ENCODE measurements at regions of chr1 and their contacts with region 1.

Region 1: GRCh38 chr1:29235955-29236684 is at the start of gene PTPRU:
- DNase-seq: peak; percentile 59
- H3K4me3 ChIP-seq: peak within 1 kb of the TSS in 2 of 3 experiments; percentile 6 to 33
- H3K27ac ChIP-seq: no peak within 1 kb of the TSS
- H3K4me1 ChIP-seq: peaks cover 16% of the 10 kb centered on the region
- H3K27me3 ChIP-seq: peaks cover 34 to 40% of the 10 kb centered on the region in 2 experiments
- CTCF ChIP-seq: peak; percentile 62 to 83
- POLR2A ChIP-seq: no peak
- total RNA-seq, gene PTPRU: 2.6 and 3.3 TPM in 2 replicates

Region 2: GRCh38 chr1:29171089-29171488 is 65.0 kb before region 1 on chr1:
- CTCF ChIA-PET with region 1: no interaction called
- POLR2A ChIA-PET with region 1: no interaction called
- dilution Hi-C with region 1: no loop called
- intact Hi-C with region 1: no loop called
- DNase-seq: no peak
- H3K4me3 ChIP-seq: no peak overlapping the region
- H3K27ac ChIP-seq: no peak overlapping the region
- H3K4me1 ChIP-seq: no peaks in the 10 kb centered on the region
- H3K27me3 ChIP-seq: no peaks in the 10 kb centered on the region
- CTCF ChIP-seq: no peak
- POLR2A ChIP-seq: no peak

Region 3: GRCh38 chr1:29341936-29342335 is 105.8 kb after region 1 on chr1:
- CTCF ChIA-PET with region 1: interaction called, 4 read pairs
- POLR2A ChIA-PET with region 1: interaction called, 9 read pairs
- dilution Hi-C with region 1: no loop called
- intact Hi-C with region 1: loop called (anchors 1 kb)
- DNase-seq: no peak
- H3K4me3 ChIP-seq: no peak overlapping the region
- H3K27ac ChIP-seq: no peak overlapping the region
- H3K4me1 ChIP-seq: no peaks in the 10 kb centered on the region
- H3K27me3 ChIP-seq: peaks cover 0 to 2% of the 10 kb centered on the region in 2 experiments
- CTCF ChIP-seq: no peak
- POLR2A ChIP-seq: no peak

Region 4: GRCh38 chr1:29453502-29454240 is 217.6 kb after region 1 on chr1:
- CTCF ChIA-PET with region 1: no interaction called
- POLR2A ChIA-PET with region 1: no interaction called
- dilution Hi-C with region 1: no loop called
- intact Hi-C with region 1: loop called (anchors 5 kb)
- DNase-seq: peak; percentile 26
- H3K4me3 ChIP-seq: no peak overlapping the region
- H3K27ac ChIP-seq: no peak overlapping the region
- H3K4me1 ChIP-seq: no peaks in the 10 kb centered on the region
- H3K27me3 ChIP-seq: no peaks in the 10 kb centered on the region
- CTCF ChIP-seq: peak; percentile 6 to 18
- POLR2A ChIP-seq: no peak

Region 5: DNA sequence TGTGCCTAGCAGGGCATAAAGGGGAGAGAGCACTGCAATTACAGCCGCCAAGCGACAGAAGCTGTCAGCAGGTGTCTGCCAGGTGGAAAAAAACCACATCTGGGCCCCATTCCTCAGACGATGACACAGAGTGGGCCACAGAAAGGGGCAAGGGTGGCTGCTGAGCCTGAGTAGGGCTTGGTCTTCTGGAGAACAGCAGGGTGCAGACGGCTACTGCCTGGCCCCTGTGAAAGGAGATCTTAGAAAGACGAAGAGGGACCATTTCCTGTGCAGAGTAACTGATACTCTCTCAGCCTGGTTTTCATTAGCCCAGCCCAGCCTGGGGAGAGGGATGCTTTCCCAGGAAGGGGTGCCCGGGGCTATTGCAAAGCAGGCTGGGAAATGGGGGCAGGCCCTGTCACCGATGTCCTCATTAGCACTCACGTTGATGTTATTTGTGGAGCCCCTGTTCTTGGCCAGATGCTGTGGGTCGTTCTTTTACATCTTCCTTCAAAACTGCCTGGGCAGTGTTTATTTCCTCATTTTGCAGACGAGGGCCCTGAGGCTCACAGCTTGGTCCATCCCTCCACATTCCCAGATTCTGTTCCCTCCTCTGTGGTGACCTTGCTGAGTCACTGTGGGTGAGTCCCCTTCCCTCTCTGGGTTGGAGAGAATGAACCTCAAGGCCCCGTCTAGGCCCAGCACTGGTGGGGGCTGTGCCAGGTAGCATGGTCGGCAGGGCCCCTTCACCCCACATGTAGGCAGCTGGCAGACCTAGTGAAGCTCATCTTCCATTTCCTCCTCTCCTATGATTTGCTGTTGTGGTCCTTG is 473.0 kb after region 1 on chr1:
- CTCF ChIA-PET with region 1: interaction called, 5 read pairs
- POLR2A ChIA-PET with region 1: no interaction called
- dilution Hi-C with region 1: no loop called
- intact Hi-C with region 1: loop called (anchors 2 kb)
- DNase-seq: no peak
- H3K4me3 ChIP-seq: no peak overlapping the region
- H3K27ac ChIP-seq: peak overlapping the region; percentile 95
- H3K4me1 ChIP-seq: peaks cover 48% of the 10 kb centered on the region
- H3K27me3 ChIP-seq: peaks cover 10 to 12% of the 10 kb centered on the region in 2 experiments
- CTCF ChIP-seq: no peak
- POLR2A ChIP-seq: peak; percentile 60

Region 6: DNA sequence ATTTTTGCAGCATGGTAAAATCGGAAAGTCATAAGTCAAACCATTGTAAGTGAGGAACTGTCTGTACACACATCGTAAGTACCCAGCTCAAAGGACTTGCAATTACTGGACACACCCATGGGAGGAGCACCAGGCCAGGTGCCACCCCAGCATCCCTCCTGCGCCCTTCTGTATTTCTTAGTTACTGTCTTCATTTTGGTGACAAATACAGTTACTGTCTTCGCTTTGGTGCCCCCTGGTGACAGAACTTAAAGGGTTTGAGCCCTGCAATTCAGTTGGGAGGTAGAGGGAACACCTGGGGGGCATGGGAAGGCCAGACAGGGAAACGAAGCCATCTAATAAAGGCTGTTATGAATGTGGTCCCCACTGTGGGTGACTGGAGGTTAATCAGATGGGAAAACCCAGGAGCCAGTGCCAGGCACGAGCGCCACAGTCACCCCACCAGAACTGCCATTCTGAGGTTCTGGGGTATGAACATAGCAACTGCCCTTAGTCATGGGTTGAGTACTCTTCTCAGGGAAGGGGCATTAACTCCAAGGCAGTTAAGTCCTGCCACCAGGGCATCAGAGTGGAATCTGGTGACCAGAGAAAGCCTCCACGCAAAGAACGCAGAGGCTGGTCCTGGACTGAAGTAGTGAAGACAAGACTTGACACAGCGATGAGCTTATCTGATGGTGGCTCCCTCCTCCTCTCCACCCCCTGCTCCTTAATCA is 613.1 kb after region 1 on chr1:
- CTCF ChIA-PET with region 1: no interaction called
- POLR2A ChIA-PET with region 1: no interaction called
- dilution Hi-C with region 1: no loop called
- intact Hi-C with region 1: loop called (anchors 1 kb)
- DNase-seq: peak; percentile 21
- H3K4me3 ChIP-seq: no peak overlapping the region
- H3K27ac ChIP-seq: no peak overlapping the region
- H3K4me1 ChIP-seq: no peaks in the 10 kb centered on the region
- H3K27me3 ChIP-seq: no peaks in the 10 kb centered on the region
- CTCF ChIP-seq: peak; percentile 23 to 34
- POLR2A ChIP-seq: no peak

Region 7: GRCh38 chr1:30106125-30106524 is 870.0 kb after region 1 on chr1:
- CTCF ChIA-PET with region 1: interaction called, 5 read pairs
- POLR2A ChIA-PET with region 1: no interaction called
- dilution Hi-C with region 1: no loop called
- intact Hi-C with region 1: loop called (anchors 1 kb)
- DNase-seq: peak; percentile 14
- H3K4me3 ChIP-seq: no peak overlapping the region
- H3K27ac ChIP-seq: no peak overlapping the region
- H3K4me1 ChIP-seq: no peaks in the 10 kb centered on the region
- H3K27me3 ChIP-seq: peaks cover 0 to 1% of the 10 kb centered on the region in 2 experiments
- CTCF ChIP-seq: peak; percentile 42 to 66
- POLR2A ChIP-seq: no peak

Region 8: GRCh38 chr1:30707412-30708360 is 1471.6 kb after region 1 on chr1:
- CTCF ChIA-PET with region 1: interaction called, 8 read pairs
- POLR2A ChIA-PET with region 1: interaction called, 5 read pairs
- dilution Hi-C with region 1: no loop called
- intact Hi-C with region 1: loop called (anchors 1 kb)
- DNase-seq: peak; percentile 50
- H3K4me3 ChIP-seq: no peak overlapping the region
- H3K27ac ChIP-seq: no peak overlapping the region
- H3K4me1 ChIP-seq: no peaks in the 10 kb centered on the region
- H3K27me3 ChIP-seq: peaks cover 0 to 3% of the 10 kb centered on the region in 2 experiments
- CTCF ChIP-seq: peak; percentile 84 to 88
- POLR2A ChIP-seq: no peak